Endothelial cell of umbilical vein (primary cell): ENCODE measurements at regions of chr1 and their contacts with region 1.

Region 1: DNA sequence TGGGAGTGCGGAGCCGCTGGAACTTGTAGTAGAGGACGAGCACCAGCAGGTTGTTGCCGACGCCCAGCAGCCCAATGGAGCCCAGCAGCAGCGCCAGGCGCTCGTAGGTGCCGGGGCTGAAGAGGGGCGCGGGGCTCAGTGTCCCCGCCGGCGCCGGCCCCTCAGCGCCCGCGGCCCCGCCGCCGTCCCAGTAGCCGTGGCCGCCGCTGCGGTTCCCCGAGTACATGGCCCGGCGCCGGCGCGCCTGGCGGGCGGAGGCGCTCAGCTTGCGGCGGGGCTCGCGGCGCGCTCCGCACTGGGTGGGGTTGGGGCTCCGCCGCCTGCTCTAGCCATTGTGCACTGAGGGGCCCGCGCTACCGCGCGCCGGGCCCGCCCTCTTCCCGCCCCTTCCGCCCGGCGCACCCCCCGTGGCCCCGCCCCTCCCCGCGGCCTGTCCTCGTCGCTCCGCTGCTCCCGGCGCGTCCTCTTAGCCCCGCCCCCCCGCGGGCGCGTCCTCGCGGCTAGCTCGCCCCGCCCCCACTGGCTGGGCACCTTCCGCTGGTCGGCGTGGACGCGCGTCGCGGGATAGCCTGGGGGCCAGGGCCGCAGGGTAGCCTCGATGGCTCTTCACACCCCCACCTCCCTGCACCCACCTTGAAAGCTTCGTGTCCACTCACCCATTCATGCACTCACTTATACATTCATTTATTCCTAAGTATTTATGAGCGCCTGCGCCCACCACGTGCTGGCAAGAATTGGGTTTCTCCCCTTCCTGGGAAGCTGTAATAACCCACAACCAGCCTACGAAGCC is at the starts of genes CHML and OPN3:
- DNase-seq: peak; percentile 91
- H3K4me3 ChIP-seq: peak within 1 kb of the TSS; percentile 49 to 90 (median 57)
- H3K27ac ChIP-seq: peak within 1 kb of the TSS; percentile 39
- H3K4me1 ChIP-seq: peaks cover 33% of the 10 kb centered on the region
- H3K27me3 ChIP-seq: no peaks in the 10 kb centered on the region
- CTCF ChIP-seq: peak in 1 of 2 donors; percentile 19
- POLR2A ChIP-seq: peak; percentile 95
- total RNA-seq, gene CHML: 22.3 and 23.6 TPM in 2 replicates
- total RNA-seq, gene OPN3: 22.0 and 23.9 TPM in 2 replicates

Region 2: DNA sequence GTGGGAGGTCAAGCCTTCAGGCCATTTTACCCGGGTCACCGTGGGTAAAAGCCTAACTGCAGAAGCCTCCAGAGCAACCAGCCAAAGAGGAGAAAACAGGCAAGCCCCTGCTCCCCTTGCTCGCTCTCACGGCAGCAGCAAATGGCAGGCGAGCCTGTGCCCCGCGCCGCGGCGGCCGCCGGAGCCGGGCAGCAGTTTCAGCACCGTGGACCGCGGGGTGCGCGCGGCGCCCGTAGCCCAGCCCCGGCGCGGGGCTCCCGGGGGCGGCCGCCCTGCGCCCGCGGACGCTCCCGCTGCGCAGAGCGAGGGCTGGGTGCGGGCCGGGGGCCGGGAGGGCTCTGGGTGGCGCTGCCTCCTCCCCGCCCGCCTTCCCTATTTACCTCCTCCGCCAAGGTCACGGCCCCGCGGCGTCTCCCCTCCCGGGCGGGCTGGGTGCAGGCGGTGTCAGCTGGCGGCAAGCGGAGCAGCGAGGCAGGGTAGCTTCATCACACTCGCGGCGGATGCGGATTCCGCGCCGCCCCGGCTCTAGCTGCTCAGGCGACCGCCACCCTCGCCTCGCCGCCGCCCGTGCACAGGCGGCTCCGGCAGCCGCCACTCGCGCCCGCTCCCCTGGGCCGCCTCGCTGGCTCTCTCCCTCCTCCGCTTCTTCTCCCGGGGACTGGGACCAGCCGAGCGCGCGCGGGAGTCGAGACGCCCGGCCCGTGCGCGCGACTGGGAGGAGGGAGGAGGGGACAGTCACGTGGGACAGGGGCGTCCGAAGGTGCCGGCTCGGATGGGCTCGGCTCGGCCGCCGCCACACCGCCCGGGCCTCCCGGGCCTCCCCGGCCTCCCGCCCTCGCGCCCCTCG is 283.5 kb before region 1 on chr1 and contains the start of gene RGS7:
- CTCF ChIA-PET with region 1: no interaction called
- POLR2A ChIA-PET with region 1: no interaction called
- dilution Hi-C with region 1: no loop called
- intact Hi-C with region 1: loop called (anchors 10 kb)
- DNase-seq: peak; percentile 60
- H3K4me3 ChIP-seq: peak within 1 kb of the TSS; percentile 43 to 71 (median 45)
- H3K27ac ChIP-seq: no peak within 1 kb of the TSS
- H3K4me1 ChIP-seq: peaks cover 3% of the 10 kb centered on the region
- H3K27me3 ChIP-seq: no peaks in the 10 kb centered on the region
- CTCF ChIP-seq: no peak
- POLR2A ChIP-seq: no peak
- total RNA-seq, gene RGS7: 0.44 and 1.2 TPM in 2 replicates

Region 3: GRCh38 chr1:241387216-241387615 is 253.0 kb before region 1 on chr1:
- CTCF ChIA-PET with region 1: no interaction called
- POLR2A ChIA-PET with region 1: no interaction called
- dilution Hi-C with region 1: no loop called
- intact Hi-C with region 1: no loop called
- DNase-seq: no peak
- H3K4me3 ChIP-seq: no peak overlapping the region
- H3K27ac ChIP-seq: no peak overlapping the region
- H3K4me1 ChIP-seq: no peaks in the 10 kb centered on the region
- H3K27me3 ChIP-seq: no peaks in the 10 kb centered on the region
- CTCF ChIP-seq: no peak
- POLR2A ChIP-seq: no peak

Region 4: GRCh38 chr1:241627453-241628259 is 12.6 kb before region 1 on chr1:
- CTCF ChIA-PET with region 1: interaction called, 15 read pairs
- POLR2A ChIA-PET with region 1: no interaction called
- dilution Hi-C with region 1: no loop called
- intact Hi-C with region 1: no loop called
- DNase-seq: peak; percentile 72
- H3K4me3 ChIP-seq: no peak overlapping the region
- H3K27ac ChIP-seq: no peak overlapping the region
- H3K4me1 ChIP-seq: no peaks in the 10 kb centered on the region
- H3K27me3 ChIP-seq: no peaks in the 10 kb centered on the region
- CTCF ChIP-seq: peak; percentile 39 to 51
- POLR2A ChIP-seq: no peak

Region 5: GRCh38 chr1:241847796-241848685 is 207.8 kb after region 1 on chr1 and contains the start of gene EXO1:
- CTCF ChIA-PET with region 1: no interaction called
- POLR2A ChIA-PET with region 1: no interaction called
- dilution Hi-C with region 1: no loop called
- intact Hi-C with region 1: loop called (anchors 2 kb)
- DNase-seq: peak; percentile 94
- H3K4me3 ChIP-seq: peak within 1 kb of the TSS; percentile 33 to 69 (median 61)
- H3K27ac ChIP-seq: peak within 1 kb of the TSS; percentile 85
- H3K4me1 ChIP-seq: peaks cover 12% of the 10 kb centered on the region
- H3K27me3 ChIP-seq: peaks cover 3 to 7% of the 10 kb centered on the region in 2 experiments
- CTCF ChIP-seq: peak; percentile 32 to 37
- POLR2A ChIP-seq: peak; percentile 58
- total RNA-seq, gene EXO1: 19.8 and 23.5 TPM in 2 replicates